ENCODE measurements at regions of chr7 and their contacts with region 1.

Region 1: GRCh38 chr7:104627516-104627915 is 299.1 kb downstream of the LHFPL3 start:
- DNase-seq: peak; percentile 50
- H3K4me3 ChIP-seq: no peak overlapping the region
- H3K27ac ChIP-seq: no peak overlapping the region
- H3K4me1 ChIP-seq: no peaks in the 10 kb centered on the region
- H3K27me3 ChIP-seq: no peaks in the 10 kb centered on the region
- CTCF ChIP-seq: no peak

Region 2: GRCh38 chr7:104552102-104552501 is 75.4 kb before region 1 on chr7:
- CTCF ChIA-PET with region 1: no interaction called
- POLR2A ChIA-PET with region 1: no interaction called
- intact Hi-C with region 1: loop called (anchors 10 kb)
- DNase-seq: peak; percentile 68
- H3K4me3 ChIP-seq: no peak overlapping the region
- H3K27ac ChIP-seq: no peak overlapping the region
- H3K4me1 ChIP-seq: no peaks in the 10 kb centered on the region
- H3K27me3 ChIP-seq: no peaks in the 10 kb centered on the region
- CTCF ChIP-seq: no peak

Region 3: GRCh38 chr7:105003275-105003674 is 375.8 kb after region 1 on chr7:
- CTCF ChIA-PET with region 1: no interaction called
- POLR2A ChIA-PET with region 1: no interaction called
- intact Hi-C with region 1: no loop called
- DNase-seq: peak; percentile 77
- H3K4me3 ChIP-seq: no peak overlapping the region
- H3K27ac ChIP-seq: peak overlapping the region; percentile 48
- H3K4me1 ChIP-seq: peaks cover 24% of the 10 kb centered on the region
- H3K27me3 ChIP-seq: no peaks in the 10 kb centered on the region
- CTCF ChIP-seq: no peak